CD4-positive, alpha-beta memory T cell (primary cell): ENCODE measurements at regions of chr11 and their contacts with region 1.

Region 1: DNA sequence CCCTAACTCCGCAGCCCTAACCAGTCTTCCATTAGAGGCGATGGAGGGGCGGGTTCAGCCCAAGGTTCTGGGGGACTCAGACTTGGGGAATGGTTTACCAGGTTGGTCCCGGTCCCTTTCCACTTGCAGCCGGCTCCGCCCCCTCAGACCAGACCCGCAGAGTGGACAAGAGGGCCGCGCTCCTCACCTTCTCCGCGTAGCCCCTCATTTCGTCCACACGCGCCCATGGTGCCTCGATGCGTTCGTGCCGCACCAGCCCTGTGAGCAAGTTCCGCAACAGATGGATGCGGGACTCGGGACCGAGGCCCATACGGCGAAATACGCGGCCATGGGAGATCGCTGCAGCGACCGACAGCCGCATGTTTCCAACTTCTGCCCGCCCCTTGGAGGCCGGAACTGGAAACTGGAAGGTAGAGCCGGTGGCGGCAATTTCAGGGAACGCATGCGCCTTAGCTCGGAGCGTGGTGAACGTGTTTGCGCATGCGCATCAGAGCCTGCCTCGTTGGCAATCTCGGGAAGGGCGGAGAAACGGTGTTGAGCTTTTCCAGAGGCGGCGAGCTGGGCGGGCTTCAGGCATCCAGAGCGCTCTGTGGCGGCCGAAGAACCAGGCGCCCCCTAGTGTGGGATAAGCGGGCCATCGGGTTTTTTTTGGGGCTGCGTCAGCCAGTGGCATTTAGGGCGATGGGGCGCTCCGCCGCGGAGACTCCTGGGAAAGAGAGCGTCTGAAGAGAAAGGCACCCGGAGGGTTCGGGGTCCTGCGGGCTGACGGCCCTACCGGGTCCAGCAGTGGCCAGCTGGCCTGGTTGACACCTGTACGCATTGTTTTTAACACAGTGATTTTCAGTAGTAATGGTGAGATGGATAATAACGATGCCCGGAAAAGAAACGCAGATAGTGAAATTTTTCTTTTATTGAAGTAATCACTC is at the start of gene MRPL17:
- DNase-seq: peak; percentile 99 to 100 (median 100)
- H3K4me3 ChIP-seq: peak within 1 kb of the TSS; percentile 82 to 99
- H3K4me3 Mint-ChIP-seq: peak within 1 kb of the TSS; percentile 97 to 99 (median 98)
- H3K27ac ChIP-seq: peak within 1 kb of the TSS; percentile 81
- H3K27ac Mint-ChIP-seq: peak within 1 kb of the TSS; percentile 95 to 100 (median 99)
- H3K4me1 ChIP-seq: peaks cover 26% of the 10 kb centered on the region
- H3K4me1 Mint-ChIP-seq: peaks cover 19 to 46% (median 25%) of the 10 kb centered on the region in 4 donors
- H3K27me3 ChIP-seq: no peaks in the 10 kb centered on the region
- H3K27me3 Mint-ChIP-seq: no peaks in the 10 kb centered on the region
- total RNA-seq, gene MRPL17: 33.4 to 36.9 TPM

Region 2: GRCh38 chr11:6234387-6235107 is 448.7 kb before region 1 on chr11 and contains the start of gene FHIP1B:
- CTCF ChIA-PET with region 1: no interaction called
- POLR2A ChIA-PET with region 1: interaction called, 4 read pairs
- intact Hi-C with region 1: loop called (anchors 10 kb)
- DNase-seq: peak; percentile 99 to 100 (median 100)
- H3K4me3 ChIP-seq: peak within 1 kb of the TSS; percentile 80 to 86
- H3K4me3 Mint-ChIP-seq: peak within 1 kb of the TSS; percentile 96 to 100 (median 98)
- H3K27ac ChIP-seq: peak within 1 kb of the TSS; percentile 75
- H3K27ac Mint-ChIP-seq: peak within 1 kb of the TSS; percentile 87 to 100 (median 99)
- H3K4me1 ChIP-seq: peaks cover 32% of the 10 kb centered on the region
- H3K4me1 Mint-ChIP-seq: peaks cover 27 to 51% (median 42%) of the 10 kb centered on the region in 4 donors
- H3K27me3 ChIP-seq: no peaks in the 10 kb centered on the region
- H3K27me3 Mint-ChIP-seq: peaks cover 0 to 2% of the 10 kb centered on the region in 2 donors
- total RNA-seq, gene FHIP1B: 48.7 to 50.8 TPM

Region 3: DNA sequence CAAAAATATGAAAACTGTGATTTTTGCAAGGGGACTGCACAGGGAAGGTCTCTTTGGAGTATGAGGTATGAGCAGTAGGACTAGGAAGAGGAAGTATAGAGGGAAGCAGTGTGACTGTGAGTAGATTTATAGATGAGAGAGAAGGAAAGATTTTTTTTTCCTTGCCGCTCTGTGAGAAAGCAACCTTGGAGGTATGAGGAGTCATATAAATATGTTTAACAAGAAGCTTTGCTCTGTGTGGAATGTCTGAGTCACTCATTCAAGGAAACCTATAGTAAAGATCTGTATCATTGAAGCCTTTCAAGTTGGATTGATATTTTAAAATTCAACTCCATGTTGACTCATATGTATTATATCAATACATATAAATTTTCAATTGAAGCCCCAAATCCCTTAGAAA is 159.9 kb before region 1 on chr11:
- CTCF ChIA-PET with region 1: interaction called, 104 read pairs
- POLR2A ChIA-PET with region 1: no interaction called
- intact Hi-C with region 1: no loop called
- DNase-seq: no peak
- H3K4me3 ChIP-seq: no peak overlapping the region
- H3K4me3 Mint-ChIP-seq: no peak overlapping the region
- H3K27ac ChIP-seq: no peak overlapping the region
- H3K27ac Mint-ChIP-seq: peak overlapping the region in 1 of 7 donors; percentile 74
- H3K4me1 ChIP-seq: peaks cover 14% of the 10 kb centered on the region
- H3K4me1 Mint-ChIP-seq: peaks cover 11 to 19% (median 14%) of the 10 kb centered on the region in 4 donors
- H3K27me3 ChIP-seq: no peaks in the 10 kb centered on the region
- H3K27me3 Mint-ChIP-seq: no peaks in the 10 kb centered on the region

Region 4: DNA sequence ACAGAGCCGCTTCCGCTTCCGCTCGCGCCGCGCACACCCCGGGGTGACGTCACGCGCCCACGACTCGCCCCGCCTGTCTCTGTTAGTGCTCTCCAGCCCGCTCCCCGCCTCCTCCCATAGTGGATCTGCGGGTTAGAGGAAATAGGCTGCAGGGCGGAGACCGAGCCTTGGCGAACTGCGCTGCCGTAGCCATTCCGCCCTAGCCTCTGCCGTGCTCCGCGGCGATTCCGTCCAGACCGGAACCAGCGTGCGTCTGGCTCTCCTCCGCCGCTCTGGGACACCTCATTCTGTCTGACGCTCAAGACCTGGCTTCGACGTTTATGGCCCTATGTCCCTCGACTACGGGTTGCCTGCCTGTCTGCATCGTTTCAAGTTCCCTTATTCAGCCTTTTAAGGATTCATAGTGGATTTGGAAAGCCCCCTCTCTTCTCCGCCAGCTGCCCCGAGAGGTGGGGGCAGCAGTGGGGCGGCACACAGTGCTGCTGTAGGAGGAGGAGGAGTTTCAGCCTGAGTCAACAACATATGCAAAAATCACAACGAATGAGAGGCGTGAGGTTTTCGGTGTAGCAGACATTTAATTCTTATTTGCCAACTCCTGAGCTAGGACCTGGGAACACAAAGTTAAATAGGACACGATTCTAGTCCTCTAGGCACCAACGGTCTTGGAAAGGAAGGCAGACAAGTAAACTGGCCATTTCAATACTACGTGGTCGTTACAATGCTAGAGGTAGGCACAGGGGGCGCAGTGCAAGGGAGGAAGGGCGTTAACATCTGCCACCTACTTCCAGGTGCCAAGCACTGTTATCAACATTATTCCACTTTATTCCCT is 70.8 kb before region 1 on chr11 and contains the start of gene TAF10:
- CTCF ChIA-PET with region 1: interaction called, 109 read pairs
- POLR2A ChIA-PET with region 1: interaction called, 172 read pairs
- intact Hi-C with region 1: loop called (anchors 1 kb)
- DNase-seq: peak; percentile 93 to 97 (median 95)
- H3K4me3 ChIP-seq: peak within 1 kb of the TSS; percentile 66 to 88
- H3K4me3 Mint-ChIP-seq: peak within 1 kb of the TSS; percentile 87 to 94 (median 91)
- H3K27ac ChIP-seq: peak within 1 kb of the TSS; percentile 87
- H3K27ac Mint-ChIP-seq: peak within 1 kb of the TSS in 6 of 7 donors; percentile 95 to 97 (median 97)
- H3K4me1 ChIP-seq: peaks cover 51% of the 10 kb centered on the region
- H3K4me1 Mint-ChIP-seq: peaks cover 6 to 36% (median 28%) of the 10 kb centered on the region in 4 donors
- H3K27me3 ChIP-seq: no peaks in the 10 kb centered on the region
- H3K27me3 Mint-ChIP-seq: no peaks in the 10 kb centered on the region
- total RNA-seq, gene TAF10: 116 to 120 TPM

Region 5: DNA sequence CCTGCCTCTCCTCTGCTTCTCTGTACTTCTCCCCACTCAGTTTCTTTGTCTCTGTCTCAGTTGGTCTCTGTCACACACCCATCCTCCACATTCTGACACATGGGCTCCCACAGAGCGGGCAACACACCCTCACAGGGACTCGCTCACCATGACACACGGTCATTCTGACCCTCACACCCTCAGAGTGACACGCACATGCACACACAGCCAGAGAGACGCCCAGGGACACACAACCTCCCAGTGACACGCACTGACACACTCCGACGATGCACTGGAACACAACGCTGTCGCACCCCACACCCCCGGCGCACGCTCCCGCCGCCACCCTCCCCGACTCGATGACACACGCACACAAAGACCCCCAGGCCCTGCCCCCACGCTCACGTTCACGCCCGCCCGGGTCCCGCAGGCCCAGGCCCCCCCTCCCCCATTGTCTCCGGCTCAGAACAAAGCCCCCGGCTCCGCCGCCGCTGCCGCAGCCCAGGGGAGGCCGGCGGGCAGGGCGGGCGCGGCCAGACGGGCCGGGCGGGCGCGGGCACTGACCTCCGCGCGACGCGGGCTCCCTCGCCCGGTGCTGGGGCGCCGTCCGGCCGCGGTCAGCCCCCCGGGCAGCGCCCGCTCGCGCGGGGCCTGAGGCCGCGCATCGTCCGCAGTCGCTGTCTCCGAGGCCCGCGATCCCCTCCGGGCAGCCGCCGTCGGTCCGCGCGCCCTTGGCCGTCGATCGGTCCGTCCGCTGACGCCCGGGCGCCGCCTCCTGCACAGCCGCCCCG is 28.0 kb before region 1 on chr11:
- CTCF ChIA-PET with region 1: interaction called, 15 read pairs
- POLR2A ChIA-PET with region 1: interaction called, 5 read pairs
- intact Hi-C with region 1: no loop called
- DNase-seq: peak in 1 of 5 donors; percentile 50
- H3K4me3 ChIP-seq: peak overlapping the region in 1 of 2 donors; percentile 3
- H3K4me3 Mint-ChIP-seq: no peak overlapping the region
- H3K27ac ChIP-seq: no peak overlapping the region
- H3K27ac Mint-ChIP-seq: no peak overlapping the region
- H3K4me1 ChIP-seq: peaks cover 25% of the 10 kb centered on the region
- H3K4me1 Mint-ChIP-seq: peaks cover 0 to 8% (median 1%) of the 10 kb centered on the region in 4 donors
- H3K27me3 ChIP-seq: peaks cover 7% of the 10 kb centered on the region
- H3K27me3 Mint-ChIP-seq: peaks cover 0 to 2% of the 10 kb centered on the region in 2 donors

Region 6: GRCh38 chr11:6705905-6706535 is 22.8 kb after region 1 on chr11:
- CTCF ChIA-PET with region 1: interaction called, 14 read pairs
- POLR2A ChIA-PET with region 1: interaction called, 4 read pairs
- intact Hi-C with region 1: loop called (anchors 1 kb)
- DNase-seq: peak; percentile 38 to 52 (median 46)
- H3K4me3 ChIP-seq: no peak overlapping the region
- H3K4me3 Mint-ChIP-seq: no peak overlapping the region
- H3K27ac ChIP-seq: no peak overlapping the region
- H3K27ac Mint-ChIP-seq: peak overlapping the region; percentile 4 to 84 (median 43)
- H3K4me1 ChIP-seq: no peaks in the 10 kb centered on the region
- H3K4me1 Mint-ChIP-seq: peaks cover 9 to 25% (median 18%) of the 10 kb centered on the region in 4 donors
- H3K27me3 ChIP-seq: no peaks in the 10 kb centered on the region
- H3K27me3 Mint-ChIP-seq: no peaks in the 10 kb centered on the region

Region 7: GRCh38 chr11:6825231-6825744 is 142.1 kb after region 1 on chr11:
- CTCF ChIA-PET with region 1: no interaction called
- POLR2A ChIA-PET with region 1: no interaction called
- intact Hi-C with region 1: no loop called
- DNase-seq: no peak
- H3K4me3 ChIP-seq: no peak overlapping the region
- H3K4me3 Mint-ChIP-seq: no peak overlapping the region
- H3K27ac ChIP-seq: no peak overlapping the region
- H3K27ac Mint-ChIP-seq: no peak overlapping the region
- H3K4me1 ChIP-seq: no peaks in the 10 kb centered on the region
- H3K4me1 Mint-ChIP-seq: no peaks in the 10 kb centered on the region
- H3K27me3 ChIP-seq: no peaks in the 10 kb centered on the region
- H3K27me3 Mint-ChIP-seq: peaks cover 5 to 13% of the 10 kb centered on the region in 2 donors